ENCODE measurements at regions of chr1 and their contacts with region 1.

Region 1: GRCh38 chr1:209134001-209134400 is 449.5 kb upstream of the CAMK1G start:
- DNase-seq: no peak
- H3K4me3 Mint-ChIP-seq: no peak overlapping the region
- H3K27ac Mint-ChIP-seq: no peak overlapping the region
- H3K4me1 Mint-ChIP-seq: no peaks in the 10 kb centered on the region
- H3K27me3 Mint-ChIP-seq: peaks cover 32% of the 10 kb centered on the region
- CTCF ChIP-seq: no peak

Region 2: GRCh38 chr1:209076688-209077087 is 57.3 kb before region 1 on chr1:
- CTCF ChIA-PET with region 1: no interaction called
- POLR2A ChIA-PET with region 1: no interaction called
- intact Hi-C with region 1: no loop called
- DNase-seq: peak; percentile 84
- H3K4me3 Mint-ChIP-seq: no peak overlapping the region
- H3K27ac Mint-ChIP-seq: no peak overlapping the region
- H3K4me1 Mint-ChIP-seq: peaks cover 15% of the 10 kb centered on the region
- H3K27me3 Mint-ChIP-seq: no peaks in the 10 kb centered on the region
- CTCF ChIP-seq: peak; percentile 68

Region 3: GRCh38 chr1:209150114-209150513 is 16.1 kb after region 1 on chr1:
- CTCF ChIA-PET with region 1: interaction called, 3 read pairs
- POLR2A ChIA-PET with region 1: interaction called, 11 read pairs
- intact Hi-C with region 1: no loop called
- DNase-seq: peak; percentile 90
- H3K4me3 Mint-ChIP-seq: no peak overlapping the region
- H3K27ac Mint-ChIP-seq: no peak overlapping the region
- H3K4me1 Mint-ChIP-seq: no peaks in the 10 kb centered on the region
- H3K27me3 Mint-ChIP-seq: peaks cover 62% of the 10 kb centered on the region
- CTCF ChIP-seq: no peak

Region 4: DNA sequence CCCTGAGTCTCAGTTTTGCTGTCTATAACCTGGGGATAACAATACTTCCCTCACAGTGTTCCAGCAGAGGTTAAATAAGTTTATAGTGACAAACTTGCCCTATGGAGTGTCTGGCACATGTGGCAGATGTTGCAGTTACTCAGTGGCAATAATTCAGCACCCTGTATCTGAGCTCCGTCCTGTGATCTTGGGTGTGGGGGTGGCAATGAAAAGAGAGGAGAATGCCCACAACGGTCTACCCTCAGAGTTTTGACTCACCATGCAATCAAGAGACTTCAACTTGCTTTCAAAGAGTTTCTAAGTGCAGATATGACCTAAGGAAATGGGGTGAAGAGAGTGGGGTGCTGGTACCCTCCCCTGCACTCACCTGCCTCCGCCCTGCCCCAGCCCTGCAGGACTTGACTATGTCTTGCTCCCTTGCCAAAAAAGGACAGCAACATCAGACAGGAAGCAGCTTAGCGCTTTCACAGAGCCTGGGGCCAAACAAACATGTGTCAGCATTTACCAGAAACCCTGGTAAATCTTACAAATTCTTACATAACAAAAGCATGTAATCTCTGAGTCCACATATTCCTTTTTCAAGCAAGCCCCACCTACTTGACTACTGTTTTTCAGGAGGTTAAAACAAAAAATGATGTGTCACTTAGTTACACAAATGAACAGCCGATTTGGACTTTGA is 264.5 kb after region 1 on chr1:
- CTCF ChIA-PET with region 1: no interaction called
- POLR2A ChIA-PET with region 1: no interaction called
- intact Hi-C with region 1: no loop called
- DNase-seq: peak; percentile 100
- H3K4me3 Mint-ChIP-seq: peak overlapping the region; percentile 29
- H3K27ac Mint-ChIP-seq: peak overlapping the region; percentile 79
- H3K4me1 Mint-ChIP-seq: peaks cover 28% of the 10 kb centered on the region
- H3K27me3 Mint-ChIP-seq: no peaks in the 10 kb centered on the region
- CTCF ChIP-seq: no peak

Region 5: DNA sequence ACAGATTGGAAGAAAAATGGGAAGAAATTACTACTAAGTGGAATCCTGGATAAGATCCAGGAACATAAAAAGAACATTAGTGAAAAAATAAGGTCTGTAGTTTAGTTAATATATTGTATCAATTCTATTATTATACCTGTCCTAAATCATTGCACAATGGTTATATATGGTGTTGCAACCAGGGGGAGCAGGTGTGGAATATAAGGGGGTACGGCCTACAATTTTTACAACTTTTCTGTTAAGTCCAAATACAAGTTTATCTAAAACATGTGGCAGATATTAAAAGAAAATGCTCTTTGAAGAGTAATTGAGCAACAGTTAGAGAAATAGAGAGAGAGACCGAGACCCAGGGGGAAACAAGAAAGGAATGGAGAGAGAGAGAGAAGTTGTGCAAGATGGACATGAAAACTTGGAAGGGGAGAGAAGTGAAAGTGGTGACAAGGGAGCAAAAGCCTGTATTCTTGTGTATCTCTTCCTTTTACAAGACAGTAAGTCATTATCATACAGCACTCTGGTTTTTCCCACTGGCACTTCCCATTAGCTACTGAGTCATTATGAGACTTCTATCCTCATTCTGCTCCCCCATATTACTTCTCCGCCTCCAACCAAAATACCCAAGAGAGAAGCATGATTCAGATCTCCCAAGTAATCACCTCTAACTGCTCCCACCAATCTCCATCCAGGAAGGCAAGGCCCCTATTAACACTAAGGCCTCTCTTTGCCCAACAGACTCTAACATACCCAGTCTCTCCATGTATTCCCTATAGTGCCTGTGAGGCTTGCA is 599.6 kb after region 1 on chr1:
- CTCF ChIA-PET with region 1: no interaction called
- POLR2A ChIA-PET with region 1: no interaction called
- intact Hi-C with region 1: no loop called
- DNase-seq: no peak
- H3K4me3 Mint-ChIP-seq: no peak overlapping the region
- H3K27ac Mint-ChIP-seq: no peak overlapping the region
- H3K4me1 Mint-ChIP-seq: peaks cover 4% of the 10 kb centered on the region
- H3K27me3 Mint-ChIP-seq: no peaks in the 10 kb centered on the region
- CTCF ChIP-seq: no peak

Region 6: GRCh38 chr1:209926045-209926444 is 792.0 kb after region 1 on chr1:
- CTCF ChIA-PET with region 1: no interaction called
- POLR2A ChIA-PET with region 1: no interaction called
- intact Hi-C with region 1: no loop called
- DNase-seq: peak; percentile 74
- H3K4me3 Mint-ChIP-seq: no peak overlapping the region
- H3K27ac Mint-ChIP-seq: no peak overlapping the region
- H3K4me1 Mint-ChIP-seq: peaks cover 14% of the 10 kb centered on the region
- H3K27me3 Mint-ChIP-seq: no peaks in the 10 kb centered on the region
- CTCF ChIP-seq: no peak

Measured in MCF 10A (cell line).